Sigmoid colon (tissue), 7 donors: ENCODE measurements at regions of chr19 and their contacts with region 1.

Region 1: GRCh38 chr19:43595999-43596841 is at the starts of genes IRGQ and ZNF576:
- DNase-seq: peak; percentile 100
- H3K4me3 ChIP-seq: peak within 1 kb of the TSS; percentile 57 to 73 (median 70)
- H3K27ac ChIP-seq: peak within 1 kb of the TSS; percentile 90 to 99 (median 95)
- H3K4me1 ChIP-seq: peaks cover 0 to 46% (median 37%) of the 10 kb centered on the region in 4 donors
- H3K27me3 ChIP-seq: no peaks in the 10 kb centered on the region
- CTCF ChIP-seq: no peak
- EP300 ChIP-seq: peak in 2 of 4 donors; percentile 16 to 88
- POLR2A ChIP-seq: peak; percentile 17 to 87
- total RNA-seq, gene IRGQ: 13.5 to 24.4 (median 18.8) TPM
- total RNA-seq, gene ZNF576: 12.1 to 23.3 (median 14.8) TPM

Region 2: DNA sequence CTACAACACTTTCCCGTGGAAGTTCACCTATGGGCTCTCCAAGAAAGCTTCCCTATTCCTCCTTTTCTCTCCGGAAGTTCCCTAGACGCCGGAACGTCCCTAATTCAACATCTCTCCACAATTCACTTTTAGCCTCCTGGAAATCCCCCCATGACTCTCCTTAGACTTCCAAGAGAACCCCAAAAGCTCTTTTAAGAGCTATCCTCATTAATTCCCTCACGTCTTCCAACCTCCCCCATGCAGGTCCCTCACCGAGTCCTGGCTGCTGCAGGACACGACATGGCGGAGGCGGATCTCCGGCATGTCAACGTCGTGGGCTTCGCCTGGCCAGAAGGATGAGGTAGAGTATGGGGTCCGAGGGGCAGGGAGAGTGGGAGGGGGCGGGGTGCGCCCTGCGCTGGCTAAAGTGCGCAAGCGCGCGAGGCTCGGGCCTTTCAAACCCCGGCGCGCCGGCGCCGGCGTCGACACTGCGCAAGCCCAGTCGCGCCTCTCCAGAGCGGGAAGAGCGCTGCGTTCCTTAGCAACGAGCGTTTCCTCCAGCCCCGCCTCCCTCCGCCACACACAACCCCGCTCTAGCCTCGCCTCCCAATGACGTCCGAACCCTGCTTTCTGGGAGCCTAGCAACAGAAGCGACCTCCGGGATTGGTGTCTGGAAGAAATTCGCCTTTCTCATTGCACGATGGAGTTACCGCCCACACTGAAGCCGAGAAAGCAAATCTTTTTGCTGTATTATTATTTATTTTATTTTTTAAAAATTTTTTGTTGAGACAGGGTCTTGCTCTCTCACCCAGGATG is 20.9 kb before region 1 on chr19 and contains the starts of genes PINLYP and XRCC1:
- intact Hi-C with region 1: loop called (anchors 1 kb)
- DNase-seq: peak; percentile 99
- H3K4me3 ChIP-seq: peak within 1 kb of the TSS; percentile 58 to 79 (median 76)
- H3K27ac ChIP-seq: peak within 1 kb of the TSS; percentile 86 to 88 (median 86)
- H3K4me1 ChIP-seq: peaks cover 0 to 23% (median 20%) of the 10 kb centered on the region in 4 donors
- H3K27me3 ChIP-seq: no peaks in the 10 kb centered on the region
- CTCF ChIP-seq: no peak
- EP300 ChIP-seq: peak in 1 of 4 donors; percentile 26
- POLR2A ChIP-seq: peak in 1 of 2 donors; percentile 37
- total RNA-seq, gene PINLYP: 6.6 to 21.0 (median 13.3) TPM
- total RNA-seq, gene XRCC1: 15.1 to 31.8 (median 24.0) TPM

Region 3: DNA sequence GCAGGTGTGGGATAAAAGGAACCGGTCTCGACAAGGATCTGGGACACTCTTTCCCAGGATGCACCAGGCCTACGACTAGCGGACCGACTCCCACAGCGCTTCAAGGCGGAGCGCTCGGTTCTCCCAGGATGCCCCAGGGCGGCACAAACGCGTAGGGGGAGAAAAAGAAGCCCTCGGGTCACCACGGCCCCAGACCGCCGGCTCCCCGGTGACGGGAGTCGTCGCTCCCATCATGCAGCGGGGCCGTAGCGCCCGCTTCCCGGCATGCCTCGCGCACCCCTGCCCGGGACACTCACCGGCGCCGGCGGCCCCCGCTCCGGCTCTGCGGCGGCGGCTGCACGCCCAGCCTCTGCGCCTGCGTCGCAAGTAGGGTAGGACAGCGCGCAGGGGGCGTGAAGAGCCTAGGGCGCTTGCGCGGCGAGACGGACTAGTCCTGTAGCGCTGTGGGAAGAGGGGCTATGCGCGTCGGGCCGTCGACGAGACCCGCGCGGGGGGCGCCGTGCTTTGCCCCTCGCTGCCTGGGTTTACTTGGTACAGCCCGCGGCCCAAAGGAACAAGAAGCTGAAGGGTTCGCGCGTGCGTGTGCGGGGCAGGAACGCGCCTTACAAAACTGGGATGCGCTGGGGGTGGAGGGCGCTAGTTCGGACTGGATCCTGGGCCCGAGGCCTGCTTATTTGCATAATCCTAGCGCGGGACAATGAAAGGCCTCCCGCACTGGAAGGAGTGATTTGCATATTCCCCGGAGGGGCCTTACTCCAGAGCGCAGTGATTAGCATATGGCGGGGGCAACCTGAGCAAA is 23.2 kb after region 1 on chr19 and contains the start of gene ZNF428:
- intact Hi-C with region 1: loop called (anchors 1 kb)
- DNase-seq: peak; percentile 93
- H3K4me3 ChIP-seq: peak within 1 kb of the TSS; percentile 65 to 88 (median 71)
- H3K27ac ChIP-seq: peak within 1 kb of the TSS; percentile 91 to 98 (median 98)
- H3K4me1 ChIP-seq: peaks cover 0 to 29% (median 17%) of the 10 kb centered on the region in 4 donors
- H3K27me3 ChIP-seq: no peaks in the 10 kb centered on the region
- CTCF ChIP-seq: no peak
- EP300 ChIP-seq: no peak
- POLR2A ChIP-seq: peak; percentile 47 to 58
- total RNA-seq, gene ZNF428: 22.5 to 39.6 (median 35.6) TPM

Region 4: GRCh38 chr19:43639519-43640423 is 43.6 kb after region 1 on chr19 and contains the start of gene CADM4:
- intact Hi-C with region 1: loop called (anchors 5 kb)
- DNase-seq: peak; percentile 69
- H3K4me3 ChIP-seq: peak within 1 kb of the TSS; percentile 56 to 69 (median 62)
- H3K27ac ChIP-seq: peak within 1 kb of the TSS; percentile 54 to 73 (median 63)
- H3K4me1 ChIP-seq: peaks cover 0 to 19% (median 14%) of the 10 kb centered on the region in 4 donors
- H3K27me3 ChIP-seq: no peaks in the 10 kb centered on the region
- CTCF ChIP-seq: no peak
- EP300 ChIP-seq: no peak
- POLR2A ChIP-seq: no peak
- total RNA-seq, gene CADM4: 16.4 to 21.7 (median 19.7) TPM